Psoas muscle (tissue), 8 donors: ENCODE measurements at regions of chr3 and their contacts with region 1.

Region 1: DNA sequence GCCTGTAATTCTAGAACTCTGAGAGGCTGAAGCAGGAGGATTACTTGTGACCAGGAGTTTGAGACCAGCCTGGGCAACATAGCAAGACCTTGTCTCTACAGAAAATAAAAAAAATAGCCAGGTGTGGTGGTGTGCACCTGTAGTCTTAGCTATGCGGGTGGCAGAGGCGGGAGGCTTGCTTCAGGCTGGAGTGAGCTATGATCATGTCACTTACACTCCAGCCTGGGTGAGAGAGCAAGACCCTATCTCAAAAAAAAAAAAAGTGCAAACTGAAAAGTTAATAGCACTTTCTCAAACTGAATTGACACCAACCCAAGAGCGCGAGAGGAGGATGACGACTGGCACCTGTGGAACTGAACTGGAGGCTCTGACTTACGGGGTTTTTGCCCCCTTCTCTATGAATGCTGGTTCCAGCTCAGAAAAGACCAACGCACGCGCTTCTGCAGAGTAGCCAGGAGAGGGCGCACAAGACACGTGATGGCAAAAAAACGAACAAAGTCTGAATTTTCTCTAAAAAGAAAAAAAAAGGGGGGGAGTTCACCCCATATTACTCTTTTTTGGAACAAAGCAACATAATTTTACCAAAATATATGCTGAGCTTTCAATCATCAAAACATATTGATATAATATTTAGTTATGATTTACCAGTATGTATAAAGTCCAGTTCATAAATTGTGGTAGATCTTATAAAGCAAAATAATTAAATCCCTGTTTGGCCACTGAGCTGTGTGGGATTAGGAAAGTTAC is 23.7 kb downstream of the CFAP92 start:
- DNase-seq: peak; percentile 30 to 71
- ATAC-seq: peak; percentile 53 to 79 (median 60)
- H3K4me3 ChIP-seq: no peak overlapping the region
- H3K27ac ChIP-seq: no peak overlapping the region
- H3K4me1 ChIP-seq: peaks cover 17% of the 10 kb centered on the region
- H3K27me3 ChIP-seq: no peaks in the 10 kb centered on the region
- CTCF ChIP-seq: peak; percentile 88

Region 2: DNA sequence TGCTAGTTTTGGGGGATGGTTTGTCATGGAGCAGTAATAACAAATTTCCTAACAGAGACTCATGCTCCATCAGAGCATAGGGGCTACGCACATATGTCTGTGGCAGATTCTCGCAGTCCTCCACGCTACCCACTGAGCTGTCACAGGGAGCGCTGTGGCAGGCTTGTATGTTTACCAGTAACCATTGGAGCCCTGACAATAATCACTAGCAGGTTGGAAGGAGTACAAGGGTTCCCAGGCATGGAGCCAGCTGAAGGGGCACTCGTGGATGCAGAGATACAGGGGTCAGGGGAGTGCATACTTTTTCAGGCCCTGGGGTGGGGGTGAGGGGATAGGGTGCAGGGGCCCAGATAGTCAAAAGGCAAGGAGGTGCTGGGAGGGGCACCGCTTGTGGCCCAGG is 82.5 kb after region 1 on chr3:
- intact Hi-C with region 1: loop called in 1 of 2 experiments (anchors 2 kb)
- DNase-seq: no peak
- ATAC-seq: peak in 2 of 4 donors; percentile 25 to 29
- H3K4me3 ChIP-seq: no peak overlapping the region
- H3K27ac ChIP-seq: no peak overlapping the region
- H3K4me1 ChIP-seq: no peaks in the 10 kb centered on the region
- H3K27me3 ChIP-seq: no peaks in the 10 kb centered on the region
- CTCF ChIP-seq: no peak

Region 3: GRCh38 chr3:129120254-129121004 is 150.3 kb after region 1 on chr3:
- intact Hi-C with region 1: loop called in 1 of 2 experiments (anchors 10 kb)
- DNase-seq: peak; percentile 86 to 89
- ATAC-seq: peak; percentile 37 to 59 (median 50)
- H3K4me3 ChIP-seq: peak overlapping the region; percentile 90
- H3K27ac ChIP-seq: peak overlapping the region; percentile 84
- H3K4me1 ChIP-seq: peaks cover 10% of the 10 kb centered on the region
- H3K27me3 ChIP-seq: no peaks in the 10 kb centered on the region
- CTCF ChIP-seq: peak; percentile 35